Mammary epithelial cell (primary cell): ENCODE measurements at regions of chr7 and their contacts with region 1.

Region 1: DNA sequence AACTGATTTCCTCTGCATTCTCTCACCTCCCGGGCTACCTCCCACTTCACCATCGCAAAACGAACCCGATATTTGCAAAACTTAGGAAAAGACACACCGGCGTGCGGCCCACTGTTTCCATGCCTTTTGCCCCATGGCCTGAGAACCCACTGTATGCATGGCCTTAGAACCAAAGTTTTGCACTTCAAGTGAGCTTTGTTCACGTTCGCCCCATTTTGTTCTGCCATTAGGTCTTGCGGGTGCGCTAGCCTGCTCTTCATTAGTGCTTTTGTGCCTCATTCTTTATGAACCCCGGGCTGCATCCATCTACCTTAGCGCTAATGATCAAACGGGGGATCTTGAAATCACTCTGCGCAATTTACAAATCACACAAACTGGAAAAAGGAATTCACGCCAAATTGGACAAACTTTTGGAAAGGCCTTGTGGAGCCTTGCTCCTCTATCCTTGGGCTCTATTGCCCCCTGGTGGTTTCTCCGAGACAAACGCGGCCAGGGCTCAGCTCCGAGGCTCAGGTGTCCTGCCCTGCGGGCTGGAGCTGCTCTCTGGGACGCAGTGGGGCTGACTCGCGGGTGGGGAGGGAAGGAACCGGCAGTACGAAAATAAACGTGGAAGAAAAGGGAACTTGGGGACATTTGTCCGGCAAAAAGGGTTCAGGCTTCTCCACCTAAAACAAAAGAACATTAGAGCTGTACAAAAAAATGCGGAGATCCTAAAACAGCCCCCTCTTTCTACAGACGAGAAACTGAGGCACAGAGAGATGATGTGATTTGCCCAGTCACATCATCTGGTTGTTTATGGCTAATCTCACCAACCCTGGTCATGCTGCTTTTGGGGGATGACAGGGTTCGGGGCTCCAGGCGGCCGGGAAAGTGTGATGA is 300.4 kb upstream of the NFE2L3 start:
- DNase-seq: peak; percentile 64
- H3K4me3 ChIP-seq: peak overlapping the region in 2 of 3 experiments; percentile 3 to 33
- H3K27ac ChIP-seq: no peak overlapping the region
- H3K4me1 ChIP-seq: peaks cover 14% of the 10 kb centered on the region
- H3K27me3 ChIP-seq: peaks cover 5% of the 10 kb centered on the region
- CTCF ChIP-seq: peak; percentile 83 to 92

Region 2: GRCh38 chr7:25389489-25390106 is 462.0 kb before region 1 on chr7:
- CTCF ChIA-PET with region 1: interaction called, 5 read pairs
- dilution Hi-C with region 1: no loop called
- in situ Hi-C with region 1: loop called in 1 of 2 experiments (anchors 10 kb)
- intact Hi-C with region 1: loop called (anchors 1 kb)
- DNase-seq: peak; percentile 32
- H3K4me3 ChIP-seq: no peak overlapping the region
- H3K27ac ChIP-seq: no peak overlapping the region
- H3K4me1 ChIP-seq: no peaks in the 10 kb centered on the region
- H3K27me3 ChIP-seq: no peaks in the 10 kb centered on the region
- CTCF ChIP-seq: peak; percentile 33 to 52

Region 3: DNA sequence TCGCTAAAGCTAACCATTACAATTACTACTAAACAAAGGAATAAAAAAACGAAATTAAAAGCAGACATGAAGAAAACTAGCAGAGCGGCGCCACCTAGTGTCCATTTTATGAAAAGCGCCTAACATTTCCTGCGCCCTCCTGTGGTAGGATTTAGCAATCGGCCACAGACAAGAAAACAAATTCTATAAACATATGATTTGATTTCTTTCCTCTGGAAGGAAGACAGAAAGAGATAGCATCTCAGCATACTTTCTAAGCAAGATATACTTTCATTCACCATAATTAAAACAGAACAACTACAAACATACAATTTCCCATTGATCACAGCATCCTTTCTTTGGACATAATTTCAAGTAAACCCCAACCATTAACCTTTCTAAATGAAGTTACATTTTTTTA is 285.6 kb before region 1 on chr7:
- CTCF ChIA-PET with region 1: no interaction called
- dilution Hi-C with region 1: no loop called
- in situ Hi-C with region 1: no loop called
- intact Hi-C with region 1: loop called (anchors 1 kb)
- DNase-seq: peak; percentile 38
- H3K4me3 ChIP-seq: no peak overlapping the region
- H3K27ac ChIP-seq: no peak overlapping the region
- H3K4me1 ChIP-seq: no peaks in the 10 kb centered on the region
- H3K27me3 ChIP-seq: peaks cover 3% of the 10 kb centered on the region
- CTCF ChIP-seq: peak; percentile 100

Region 4: DNA sequence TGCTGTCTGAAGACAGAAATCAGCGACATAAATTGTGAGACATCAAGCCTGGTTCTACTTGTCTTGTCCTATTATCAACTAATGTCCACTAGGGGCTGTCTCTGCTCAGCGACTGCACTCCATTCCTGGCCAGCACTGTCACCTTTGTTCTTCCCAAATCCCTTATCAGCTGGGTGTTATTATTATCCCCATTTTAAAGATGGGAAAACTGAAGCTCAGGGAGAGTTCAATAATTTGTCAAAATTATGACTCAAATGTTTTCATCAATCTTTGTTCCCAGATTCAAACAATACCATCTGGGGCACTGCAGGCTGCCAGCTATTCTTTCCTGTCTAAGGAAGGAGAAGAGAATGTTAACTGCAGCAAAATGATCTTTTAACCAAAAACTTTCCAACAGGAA is 131.1 kb before region 1 on chr7:
- CTCF ChIA-PET with region 1: no interaction called
- dilution Hi-C with region 1: no loop called
- in situ Hi-C with region 1: no loop called
- intact Hi-C with region 1: loop called (anchors 1 kb)
- DNase-seq: peak; percentile 1
- H3K4me3 ChIP-seq: no peak overlapping the region
- H3K27ac ChIP-seq: no peak overlapping the region
- H3K4me1 ChIP-seq: no peaks in the 10 kb centered on the region
- H3K27me3 ChIP-seq: no peaks in the 10 kb centered on the region
- CTCF ChIP-seq: peak; percentile 53 to 68

Region 5: GRCh38 chr7:25823571-25823970 is 28.0 kb before region 1 on chr7:
- CTCF ChIA-PET with region 1: no interaction called
- dilution Hi-C with region 1: no loop called
- in situ Hi-C with region 1: no loop called
- intact Hi-C with region 1: no loop called
- DNase-seq: no peak
- H3K4me3 ChIP-seq: no peak overlapping the region
- H3K27ac ChIP-seq: no peak overlapping the region
- H3K4me1 ChIP-seq: no peaks in the 10 kb centered on the region
- H3K27me3 ChIP-seq: peaks cover 4% of the 10 kb centered on the region
- CTCF ChIP-seq: no peak

Region 6: GRCh38 chr7:25894902-25895791 is 43.6 kb after region 1 on chr7:
- CTCF ChIA-PET with region 1: no interaction called
- dilution Hi-C with region 1: no loop called
- in situ Hi-C with region 1: no loop called
- intact Hi-C with region 1: no loop called
- DNase-seq: peak; percentile 17
- H3K4me3 ChIP-seq: no peak overlapping the region
- H3K27ac ChIP-seq: no peak overlapping the region
- H3K4me1 ChIP-seq: peaks cover 27% of the 10 kb centered on the region
- H3K27me3 ChIP-seq: no peaks in the 10 kb centered on the region
- CTCF ChIP-seq: peak; percentile 46 to 65

Region 7: GRCh38 chr7:26127411-26127810 is 275.8 kb after region 1 on chr7:
- CTCF ChIA-PET with region 1: no interaction called
- dilution Hi-C with region 1: no loop called
- in situ Hi-C with region 1: no loop called
- intact Hi-C with region 1: no loop called
- DNase-seq: no peak
- H3K4me3 ChIP-seq: no peak overlapping the region
- H3K27ac ChIP-seq: no peak overlapping the region
- H3K4me1 ChIP-seq: no peaks in the 10 kb centered on the region
- H3K27me3 ChIP-seq: no peaks in the 10 kb centered on the region
- CTCF ChIP-seq: no peak